GM13977 (cell line): ENCODE measurements at regions of chr17 and their contacts with region 1.

Region 1: DNA sequence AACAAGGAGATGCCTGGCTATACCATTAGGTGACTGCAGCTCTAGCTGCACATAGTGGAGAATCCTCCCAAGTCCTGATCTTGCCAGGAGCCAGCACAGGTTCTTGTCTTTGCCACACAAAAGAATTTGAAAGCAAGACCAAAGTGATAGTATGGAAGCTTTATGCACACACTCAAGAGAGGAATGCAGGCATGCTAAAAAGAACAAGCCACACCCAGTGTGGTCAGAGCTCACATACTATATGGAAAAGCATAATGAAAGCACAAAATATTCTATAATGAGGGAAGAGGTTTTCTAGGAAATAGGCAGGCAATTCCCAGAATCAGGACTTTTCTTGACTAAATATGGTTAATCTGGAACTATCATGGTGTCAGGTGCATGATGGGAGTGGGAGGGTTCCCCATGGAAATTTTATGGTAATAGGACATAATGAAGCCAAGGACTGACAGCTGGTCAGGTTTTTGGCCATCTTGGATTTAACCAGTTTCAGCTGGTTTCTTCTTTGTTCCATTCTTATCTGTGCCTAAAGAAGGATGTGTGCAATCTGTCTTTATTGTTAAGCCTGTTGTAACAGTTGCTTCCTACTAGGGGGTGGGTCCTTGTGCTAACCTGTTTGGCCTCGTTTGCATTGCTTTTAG is 171.6 kb downstream of the ZNF18 start:
- DNase-seq: no peak
- CTCF ChIP-seq: no peak

Region 2: GRCh38 chr17:11742886-11743285 is 82.8 kb before region 1 on chr17:
- in situ Hi-C with region 1: loop called (anchors 25 kb)
- DNase-seq: no peak
- CTCF ChIP-seq: no peak